AG04449 (cell line): ENCODE measurements at regions of chr17 and their contacts with region 1.

Region 1: GRCh38 chr17:57783106-57783742 is 38.1 kb upstream of the CCDC182 start:
- DNase-seq: no peak
- H3K4me3 ChIP-seq: no peak overlapping the region
- CTCF ChIP-seq: peak; percentile 81

Region 2: GRCh38 chr17:57130761-57131461 is 652.3 kb before region 1 on chr17:
- CTCF ChIA-PET with region 1: interaction called, 16 read pairs
- POLR2A ChIA-PET with region 1: no interaction called
- DNase-seq: peak; percentile 16
- H3K4me3 ChIP-seq: peak overlapping the region; percentile 44
- CTCF ChIP-seq: peak; percentile 86

Region 3: DNA sequence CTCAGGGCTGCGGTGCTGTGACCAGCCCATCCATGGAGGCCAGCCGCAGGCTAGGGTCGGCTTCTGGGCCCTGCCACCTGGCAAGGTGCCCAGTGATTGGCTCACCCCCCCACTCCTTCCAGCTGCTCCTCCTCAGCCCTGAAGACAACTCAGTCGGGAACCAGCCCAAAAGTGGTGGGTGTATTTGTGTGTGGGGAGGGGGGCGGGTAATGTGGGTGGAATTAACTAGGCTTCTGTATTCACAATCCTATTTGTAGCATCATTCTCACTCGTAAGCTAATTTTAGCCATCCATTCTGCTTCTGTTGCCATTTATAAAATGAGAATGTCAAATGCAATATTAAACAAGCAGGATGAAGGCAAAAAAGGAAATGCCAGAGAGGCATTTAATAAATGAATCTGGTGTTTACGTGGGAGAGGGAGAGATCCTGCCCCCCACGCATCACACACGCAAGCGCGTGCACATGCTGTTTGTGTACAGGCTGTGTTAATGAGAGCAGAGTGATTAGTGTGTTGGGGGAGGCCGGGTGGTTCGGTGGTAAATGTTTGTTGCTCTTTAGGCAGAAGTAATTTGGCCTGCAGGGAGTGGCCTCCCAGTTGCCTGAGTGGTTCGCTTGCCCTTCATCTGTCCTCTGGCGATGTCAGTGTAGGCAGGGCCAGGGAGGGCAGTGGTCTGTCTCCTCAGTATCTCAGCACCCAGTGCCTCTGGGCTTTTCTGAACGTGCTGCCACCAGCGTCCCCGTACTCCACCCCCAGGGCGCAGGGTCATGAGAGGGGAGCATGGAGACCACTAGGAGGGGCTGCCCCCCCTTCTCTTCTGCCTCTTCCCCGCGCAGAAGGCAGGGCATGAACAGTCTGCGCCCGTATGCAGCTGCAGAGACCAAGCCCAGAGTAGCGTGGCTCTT is 178.2 kb before region 1 on chr17:
- CTCF ChIA-PET with region 1: no interaction called
- POLR2A ChIA-PET with region 1: no interaction called
- DNase-seq: no peak
- H3K4me3 ChIP-seq: no peak overlapping the region; the same call in 1 of the 2 replicates
- CTCF ChIP-seq: no peak

Region 4: GRCh38 chr17:57766318-57766943 is 16.8 kb before region 1 on chr17:
- CTCF ChIA-PET with region 1: interaction called, 16 read pairs
- POLR2A ChIA-PET with region 1: no interaction called
- DNase-seq: no peak
- H3K4me3 ChIP-seq: no peak overlapping the region
- CTCF ChIP-seq: no peak

Region 5: GRCh38 chr17:57794841-57795240 is 11.6 kb after region 1 on chr17:
- CTCF ChIA-PET with region 1: interaction called, 12 read pairs
- POLR2A ChIA-PET with region 1: no interaction called
- DNase-seq: no peak
- H3K4me3 ChIP-seq: no peak overlapping the region
- CTCF ChIP-seq: no peak

Region 6: DNA sequence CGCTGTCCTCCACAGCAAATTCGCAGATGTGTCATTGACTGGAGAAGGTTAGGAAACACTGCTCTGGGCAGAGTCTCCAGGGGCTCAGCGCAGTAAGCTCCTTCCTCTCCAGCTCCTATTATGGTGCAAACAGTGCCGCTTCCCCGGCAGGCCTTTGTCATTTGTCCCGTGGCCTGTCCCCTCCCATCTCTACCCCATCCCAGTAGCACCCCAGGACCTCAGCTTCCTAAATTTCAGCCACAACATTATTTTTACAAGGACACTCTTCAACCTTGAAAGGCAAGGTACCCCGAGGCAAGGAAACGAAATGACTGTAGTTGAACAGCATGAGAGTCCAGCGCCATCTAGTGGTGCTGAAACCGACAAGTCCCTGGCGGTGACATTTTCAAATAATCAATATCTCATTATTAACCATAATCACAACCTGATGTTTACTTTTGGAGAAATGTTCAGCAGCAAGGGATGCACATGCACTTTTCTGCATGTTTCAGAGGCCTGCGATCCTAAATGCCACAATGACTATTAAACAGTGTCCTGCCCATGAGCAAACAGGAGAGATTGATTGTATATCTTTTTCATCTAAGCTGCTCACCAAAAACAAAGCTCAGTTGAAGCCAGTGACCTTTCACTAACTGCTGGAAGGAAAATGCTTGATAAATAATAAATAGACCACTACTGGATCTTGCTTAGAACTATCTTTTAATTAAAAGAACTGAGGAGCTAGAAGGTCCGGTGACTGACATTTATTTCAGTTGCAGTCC is 50.1 kb after region 1 on chr17:
- CTCF ChIA-PET with region 1: interaction called, 24 read pairs
- POLR2A ChIA-PET with region 1: no interaction called
- DNase-seq: no peak
- H3K4me3 ChIP-seq: peak overlapping the region; percentile 58
- CTCF ChIP-seq: peak; percentile 78

Region 7: DNA sequence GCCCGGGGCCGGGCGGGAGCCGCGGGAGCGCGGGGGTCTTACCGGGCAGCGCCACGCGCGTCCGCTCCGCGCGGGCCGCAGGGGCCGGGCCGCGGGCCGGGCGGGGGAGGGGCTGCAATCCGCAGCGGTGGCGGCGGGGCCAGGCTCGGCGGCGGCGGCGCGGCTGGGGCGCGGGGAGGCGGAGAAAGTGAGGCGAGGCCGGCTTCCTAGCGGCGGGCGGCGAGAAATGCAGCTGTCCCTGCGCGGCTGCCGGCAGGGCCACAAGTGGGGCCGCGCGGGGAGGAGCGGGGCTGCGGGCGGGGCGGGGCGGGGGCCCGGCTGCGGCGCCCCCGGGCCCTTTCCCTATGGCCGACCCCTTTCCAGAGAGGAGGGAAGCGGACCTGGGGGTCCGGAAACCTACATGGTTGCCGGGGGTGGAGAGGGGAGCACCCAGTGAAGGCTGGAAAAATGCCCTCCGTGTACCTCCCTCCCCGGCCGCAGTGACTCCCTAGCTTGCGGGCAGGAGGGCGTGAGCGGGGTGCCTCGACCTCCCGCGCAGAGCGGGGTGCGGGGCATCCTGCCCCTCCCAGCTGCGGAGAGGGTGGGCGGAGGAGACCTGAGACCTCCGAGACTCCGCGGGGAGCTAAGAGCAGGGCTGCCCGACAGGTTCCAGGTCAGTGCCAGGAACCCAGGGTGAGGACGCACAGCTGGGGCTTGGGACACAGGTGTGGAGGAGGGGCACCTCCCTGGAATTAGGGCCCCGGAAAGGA is 172.1 kb after region 1 on chr17 and contains the start of gene CUEDC1:
- CTCF ChIA-PET with region 1: no interaction called
- POLR2A ChIA-PET with region 1: no interaction called
- DNase-seq: no peak
- H3K4me3 ChIP-seq: peak within 1 kb of the TSS; percentile 70
- CTCF ChIP-seq: peak; percentile 68